Panc1 (cell line): ENCODE measurements at regions of chr17 and their contacts with region 1.

Region 1: GRCh38 chr17:41966463-41967140 is at the start of gene CNP:
- DNase-seq: peak; percentile 8
- ATAC-seq: peak; percentile 87
- H3K4me3 ChIP-seq: peak within 1 kb of the TSS; percentile 83 to 86
- H3K27ac ChIP-seq: peak within 1 kb of the TSS; percentile 90
- H3K4me1 ChIP-seq: peaks cover 20% of the 10 kb centered on the region
- H3K27me3 ChIP-seq: no peaks in the 10 kb centered on the region
- CTCF ChIP-seq: no peak
- total RNA-seq, gene CNP: 79.9 TPM

Region 2: GRCh38 chr17:42016925-42017796 is 50.6 kb after region 1 on chr17 and contains the start of gene DNAJC7:
- CTCF ChIA-PET with region 1: interaction called, 5 read pairs
- POLR2A ChIA-PET with region 1: interaction called, 13 read pairs
- in situ Hi-C with region 1: no loop called
- intact Hi-C with region 1: no loop called
- DNase-seq: peak; percentile 35
- ATAC-seq: peak; percentile 95
- H3K4me3 ChIP-seq: peak within 1 kb of the TSS; percentile 90 to 93
- H3K27ac ChIP-seq: peak within 1 kb of the TSS; percentile 94
- H3K4me1 ChIP-seq: peaks cover 7% of the 10 kb centered on the region; the same call in 1 of the 2 replicates
- H3K27me3 ChIP-seq: no peaks in the 10 kb centered on the region
- CTCF ChIP-seq: no peak
- total RNA-seq, gene DNAJC7: 72.0 TPM

Region 3: DNA sequence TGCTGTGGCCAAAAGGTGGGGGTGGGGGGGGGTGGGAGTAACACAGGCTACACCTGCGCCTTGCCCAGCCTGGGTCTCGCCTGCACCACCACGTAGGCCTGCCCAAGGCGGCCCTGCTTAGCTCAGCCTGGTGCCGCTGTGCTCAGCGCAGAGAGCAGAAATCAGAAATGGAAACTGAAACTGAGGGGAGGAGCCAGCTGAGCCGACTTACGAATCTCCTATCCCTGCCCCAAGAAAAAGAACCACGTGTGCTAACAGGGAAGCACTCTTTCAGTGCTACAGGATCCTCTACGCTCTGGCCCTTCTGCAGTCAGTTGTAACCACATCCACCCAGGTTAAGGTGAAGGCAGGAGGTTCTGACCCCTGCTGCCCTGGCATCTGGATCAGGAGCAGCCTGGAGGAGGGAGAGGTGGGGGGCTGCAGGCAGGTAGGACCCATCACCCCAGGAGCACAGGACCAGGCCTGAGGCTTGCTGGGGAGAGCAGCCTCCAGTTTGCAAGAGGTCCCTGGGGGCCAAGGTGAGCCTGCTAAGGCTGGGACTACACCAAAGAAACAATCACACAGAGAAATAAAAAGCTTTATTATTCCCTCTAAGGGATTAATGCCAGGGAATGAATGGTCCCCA is 146.1 kb after region 1 on chr17 and contains the start of gene DHX58:
- CTCF ChIA-PET with region 1: no interaction called
- POLR2A ChIA-PET with region 1: no interaction called
- in situ Hi-C with region 1: no loop called
- intact Hi-C with region 1: loop called (anchors 5 kb)
- DNase-seq: no peak
- ATAC-seq: peak; percentile 87
- H3K4me3 ChIP-seq: peak within 1 kb of the TSS; percentile 31 to 49
- H3K27ac ChIP-seq: peak within 1 kb of the TSS; percentile 86
- H3K4me1 ChIP-seq: peaks cover 9% of the 10 kb centered on the region
- H3K27me3 ChIP-seq: no peaks in the 10 kb centered on the region
- CTCF ChIP-seq: no peak
- total RNA-seq, gene DHX58: 9.7 TPM

Region 4: DNA sequence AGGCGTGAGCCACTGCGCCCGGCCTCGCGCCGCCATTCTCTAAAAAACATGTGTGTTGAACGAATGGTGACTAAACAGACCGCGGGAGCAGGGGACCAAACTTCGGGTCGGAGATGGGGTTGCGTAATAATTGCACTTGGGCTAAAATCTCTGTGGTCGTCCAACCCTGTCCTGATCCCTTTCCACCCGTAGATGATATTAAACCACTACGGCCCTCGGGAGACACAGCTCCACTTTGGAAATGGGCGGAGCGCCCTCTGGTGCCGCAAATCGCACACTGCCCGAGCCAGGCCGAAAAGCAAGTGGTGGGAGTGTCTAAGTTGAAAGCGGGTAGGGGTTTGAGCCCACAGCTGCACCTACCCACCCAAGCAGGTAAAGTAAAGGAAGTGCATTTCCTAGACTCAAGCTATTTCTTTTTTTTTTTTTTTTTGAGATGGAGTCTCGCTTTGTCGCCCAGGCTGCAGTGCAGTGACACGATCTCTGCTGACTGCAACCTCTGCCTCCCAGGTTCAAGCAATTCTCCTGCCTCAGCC is 439.4 kb after region 1 on chr17:
- CTCF ChIA-PET with region 1: no interaction called
- POLR2A ChIA-PET with region 1: no interaction called
- in situ Hi-C with region 1: no loop called
- intact Hi-C with region 1: no loop called
- DNase-seq: no peak
- ATAC-seq: peak; percentile 43
- H3K4me3 ChIP-seq: no peak overlapping the region
- H3K27ac ChIP-seq: no peak overlapping the region
- H3K4me1 ChIP-seq: peaks cover 53% of the 10 kb centered on the region
- H3K27me3 ChIP-seq: no peaks in the 10 kb centered on the region
- CTCF ChIP-seq: peak; percentile 75